Gastrocnemius medialis (tissue), 4 donors: ENCODE measurements at regions of chr11 and their contacts with region 1.

Region 1: DNA sequence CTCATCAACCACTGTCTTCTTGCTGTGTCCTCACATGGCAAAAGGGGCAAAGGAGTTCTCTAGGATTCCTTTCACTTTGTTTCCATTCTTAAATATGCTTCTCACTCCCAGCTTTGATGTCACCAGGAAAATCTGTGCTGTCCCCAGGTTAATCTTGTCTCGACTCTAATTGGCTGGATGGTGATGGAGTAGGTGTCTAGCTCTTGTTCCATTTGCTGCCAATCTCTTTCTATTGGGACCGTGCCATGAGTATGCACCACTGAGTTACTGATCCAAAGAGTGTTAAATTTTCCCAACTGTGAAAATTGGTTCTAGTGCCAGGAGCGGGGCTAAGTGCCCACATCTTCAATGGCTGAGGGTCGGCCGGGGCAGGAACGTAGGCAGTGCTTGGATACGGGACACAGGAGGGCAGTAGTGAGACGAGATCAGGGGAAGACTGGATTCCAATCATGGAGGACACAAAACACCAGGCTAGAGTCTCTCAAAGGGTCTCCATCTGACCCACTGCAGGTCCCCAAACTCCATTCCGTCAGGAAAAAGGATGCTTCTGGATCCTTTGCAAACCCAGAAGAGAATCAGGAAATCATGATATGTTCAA is 47.7 kb upstream of the CSNK2A3 start:
- DNase-seq: no peak
- ATAC-seq: no peak
- H3K4me3 ChIP-seq: no peak overlapping the region
- H3K27ac ChIP-seq: no peak overlapping the region
- H3K4me1 ChIP-seq: peaks cover 9 to 24% of the 10 kb centered on the region in 2 donors
- H3K27me3 ChIP-seq: no peaks in the 10 kb centered on the region
- CTCF ChIP-seq: no peak
- POLR2A ChIP-seq: no peak

Region 2: DNA sequence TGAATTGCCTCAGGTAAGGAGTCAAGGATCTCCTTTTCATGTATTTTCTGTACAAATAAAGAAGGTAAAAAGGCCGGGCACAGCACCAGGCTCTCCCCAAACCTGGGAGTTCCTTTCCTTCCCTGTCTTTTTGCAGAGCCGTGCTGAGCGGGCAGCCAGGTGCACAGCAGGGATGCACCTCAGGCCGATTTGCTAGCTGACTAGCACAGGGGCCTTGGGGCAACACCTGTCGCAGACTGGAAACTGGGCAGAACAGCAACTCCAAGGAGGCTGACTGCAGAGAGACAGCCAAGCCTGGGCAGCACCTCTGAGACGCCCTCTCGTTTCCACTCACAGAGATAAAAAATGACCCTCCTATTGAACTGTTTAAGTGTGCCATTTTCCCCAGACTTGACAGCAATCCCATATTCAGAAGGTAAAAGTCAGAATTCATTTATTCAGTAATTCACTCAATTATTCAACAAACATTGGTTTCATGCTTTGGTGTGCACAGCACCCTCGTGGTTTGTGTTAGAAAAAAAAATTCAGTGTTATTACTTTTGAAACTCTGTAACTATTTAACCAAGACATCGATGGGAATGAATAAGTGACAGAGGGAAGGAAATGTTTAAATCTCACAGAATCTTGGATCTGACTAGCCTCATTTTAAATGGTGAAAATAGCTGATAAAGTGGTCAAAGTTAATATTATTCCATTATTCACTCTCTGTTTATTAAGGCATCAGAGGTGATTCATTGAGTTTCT is 100.2 kb after region 1 on chr11:
- in situ Hi-C with region 1: no loop called
- intact Hi-C with region 1: no loop called
- DNase-seq: no peak
- ATAC-seq: no peak
- H3K4me3 ChIP-seq: no peak overlapping the region
- H3K27ac ChIP-seq: no peak overlapping the region
- H3K4me1 ChIP-seq: peaks cover 3% of the 10 kb centered on the region in 2 donors
- H3K27me3 ChIP-seq: no peaks in the 10 kb centered on the region
- CTCF ChIP-seq: no peak
- POLR2A ChIP-seq: no peak

Region 3: DNA sequence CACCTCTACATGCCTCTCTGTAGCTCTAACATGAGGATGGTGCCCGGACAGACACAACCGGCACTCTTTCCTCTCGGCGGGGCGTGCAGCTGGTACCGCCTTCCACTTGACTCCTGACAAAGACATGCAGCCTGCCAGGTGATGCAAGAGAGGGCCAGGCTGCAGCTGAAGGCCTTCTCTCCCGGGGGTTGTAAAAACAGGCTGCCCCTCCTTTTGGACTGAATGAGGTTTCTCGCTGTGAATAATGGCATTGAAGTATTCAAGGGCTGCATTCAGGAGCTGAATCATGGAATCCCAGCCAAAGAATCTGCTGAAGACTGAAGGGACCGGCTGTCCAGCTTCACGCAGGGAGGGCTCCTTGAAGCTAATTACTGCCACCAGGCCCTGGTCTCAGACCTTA is 110.2 kb after region 1 on chr11:
- in situ Hi-C with region 1: no loop called
- intact Hi-C with region 1: loop called (anchors 5 kb)
- DNase-seq: peak; percentile 44 to 55
- ATAC-seq: peak; percentile 19 to 21
- H3K4me3 ChIP-seq: no peak overlapping the region
- H3K27ac ChIP-seq: peak overlapping the region; percentile 72 to 88 (median 82)
- H3K4me1 ChIP-seq: peaks cover 38 to 54% of the 10 kb centered on the region in 2 donors
- H3K27me3 ChIP-seq: no peaks in the 10 kb centered on the region
- CTCF ChIP-seq: no peak
- POLR2A ChIP-seq: no peak

Region 4: GRCh38 chr11:11534981-11535380 is 134.2 kb after region 1 on chr11:
- in situ Hi-C with region 1: no loop called
- intact Hi-C with region 1: loop called (anchors 5 kb)
- DNase-seq: no peak
- ATAC-seq: no peak
- H3K4me3 ChIP-seq: no peak overlapping the region
- H3K27ac ChIP-seq: peak overlapping the region in 1 of 4 donors; percentile 72
- H3K4me1 ChIP-seq: peaks cover 62 to 76% of the 10 kb centered on the region in 2 donors
- H3K27me3 ChIP-seq: no peaks in the 10 kb centered on the region
- CTCF ChIP-seq: no peak
- POLR2A ChIP-seq: no peak

Region 5: GRCh38 chr11:11621573-11622319 is 221.0 kb after region 1 on chr11 and contains the start of gene GALNT18:
- in situ Hi-C with region 1: no loop called
- intact Hi-C with region 1: loop called (anchors 10 kb)
- DNase-seq: peak; percentile 84 to 89
- ATAC-seq: peak; percentile 79 to 83
- H3K4me3 ChIP-seq: peak within 1 kb of the TSS; percentile 65 to 88 (median 76)
- H3K27ac ChIP-seq: peak within 1 kb of the TSS; percentile 69 to 88 (median 80)
- H3K4me1 ChIP-seq: peaks cover 17 to 25% of the 10 kb centered on the region in 2 donors
- H3K27me3 ChIP-seq: no peaks in the 10 kb centered on the region
- CTCF ChIP-seq: peak; percentile 32 to 73 (median 67)
- POLR2A ChIP-seq: peak; percentile 72 to 87
- total RNA-seq, gene GALNT18: 10.5 to 29.2 (median 11.2) TPM